Activated CD4-positive, alpha-beta memory T cell treated with anti-CD3 and anti-CD28 coated beads, Interleukin-2, amount 10 ng/mL, durations not matched to agents 7 days and 5 days (primary cell): ENCODE measurements at regions of chr10 and their contacts with region 1.

Region 1: GRCh38 chr10:7417103-7417623 is 6.3 kb upstream of the SFMBT2 start:
- DNase-seq: no peak
- H3K4me3 Mint-ChIP-seq: no peak overlapping the region
- H3K27ac Mint-ChIP-seq: peak overlapping the region; percentile 16
- H3K4me1 Mint-ChIP-seq: peaks cover 25% of the 10 kb centered on the region
- H3K27me3 Mint-ChIP-seq: peaks cover 44% of the 10 kb centered on the region

Region 2: GRCh38 chr10:7121154-7121810 is 295.9 kb before region 1 on chr10:
- CTCF ChIA-PET with region 1: interaction called, 18 read pairs
- POLR2A ChIA-PET with region 1: no interaction called
- DNase-seq: peak; percentile 66
- H3K4me3 Mint-ChIP-seq: no peak overlapping the region
- H3K27ac Mint-ChIP-seq: no peak overlapping the region
- H3K4me1 Mint-ChIP-seq: peaks cover 3% of the 10 kb centered on the region
- H3K27me3 Mint-ChIP-seq: peaks cover 36% of the 10 kb centered on the region

Region 3: GRCh38 chr10:8033812-8034465 is 616.8 kb after region 1 on chr10:
- CTCF ChIA-PET with region 1: no interaction called
- POLR2A ChIA-PET with region 1: no interaction called
- DNase-seq: no peak
- H3K4me3 Mint-ChIP-seq: no peak overlapping the region
- H3K27ac Mint-ChIP-seq: no peak overlapping the region
- H3K4me1 Mint-ChIP-seq: peaks cover 22% of the 10 kb centered on the region
- H3K27me3 Mint-ChIP-seq: peaks cover 59% of the 10 kb centered on the region